Uterus (tissue), 4 donors: ENCODE measurements at regions of chrX and their contacts with region 1.

Region 1: GRCh38 chrX:11758400-11759171 is 549 bp downstream of the MSL3 start:
- DNase-seq: peak; percentile 83 to 85
- H3K4me3 ChIP-seq: peak overlapping the region; percentile 58 to 63
- H3K27ac ChIP-seq: peak overlapping the region; percentile 92 to 95
- H3K4me1 ChIP-seq: no peaks in the 10 kb centered on the region
- H3K27me3 ChIP-seq: no peaks in the 10 kb centered on the region
- CTCF ChIP-seq: peak; percentile 46 to 83 (median 61)
- POLR2A ChIP-seq: peak in 1 of 2 donors; percentile 39

Region 2: DNA sequence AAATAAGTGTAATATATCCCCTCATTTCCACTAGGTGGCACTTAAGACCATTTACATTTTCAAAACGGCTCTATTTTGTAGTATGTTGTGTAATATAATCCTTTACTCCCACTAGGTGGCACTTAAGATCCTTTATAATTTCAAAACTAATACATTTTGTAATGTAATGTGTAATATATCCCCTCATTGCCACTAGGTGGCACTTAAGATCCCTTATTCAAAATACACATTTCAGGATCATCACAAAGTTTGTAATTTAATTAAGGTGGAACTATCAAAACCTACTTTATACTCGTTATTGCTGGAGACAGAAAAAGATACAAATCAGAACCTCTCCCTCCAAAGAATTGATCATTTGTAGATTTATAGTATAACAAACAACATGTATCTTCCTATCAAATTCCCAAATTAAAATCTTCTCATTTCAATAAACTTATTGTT is 225.4 kb before region 1 on chrX:
- intact Hi-C with region 1: loop called (anchors 10 kb)
- DNase-seq: no peak
- H3K4me3 ChIP-seq: no peak overlapping the region
- H3K27ac ChIP-seq: no peak overlapping the region
- H3K4me1 ChIP-seq: no peaks in the 10 kb centered on the region
- H3K27me3 ChIP-seq: no peaks in the 10 kb centered on the region
- CTCF ChIP-seq: peak; percentile 69 to 99 (median 92)
- POLR2A ChIP-seq: no peak